ENCODE measurements at regions of chr6 and their contacts with region 1.

Region 1: DNA sequence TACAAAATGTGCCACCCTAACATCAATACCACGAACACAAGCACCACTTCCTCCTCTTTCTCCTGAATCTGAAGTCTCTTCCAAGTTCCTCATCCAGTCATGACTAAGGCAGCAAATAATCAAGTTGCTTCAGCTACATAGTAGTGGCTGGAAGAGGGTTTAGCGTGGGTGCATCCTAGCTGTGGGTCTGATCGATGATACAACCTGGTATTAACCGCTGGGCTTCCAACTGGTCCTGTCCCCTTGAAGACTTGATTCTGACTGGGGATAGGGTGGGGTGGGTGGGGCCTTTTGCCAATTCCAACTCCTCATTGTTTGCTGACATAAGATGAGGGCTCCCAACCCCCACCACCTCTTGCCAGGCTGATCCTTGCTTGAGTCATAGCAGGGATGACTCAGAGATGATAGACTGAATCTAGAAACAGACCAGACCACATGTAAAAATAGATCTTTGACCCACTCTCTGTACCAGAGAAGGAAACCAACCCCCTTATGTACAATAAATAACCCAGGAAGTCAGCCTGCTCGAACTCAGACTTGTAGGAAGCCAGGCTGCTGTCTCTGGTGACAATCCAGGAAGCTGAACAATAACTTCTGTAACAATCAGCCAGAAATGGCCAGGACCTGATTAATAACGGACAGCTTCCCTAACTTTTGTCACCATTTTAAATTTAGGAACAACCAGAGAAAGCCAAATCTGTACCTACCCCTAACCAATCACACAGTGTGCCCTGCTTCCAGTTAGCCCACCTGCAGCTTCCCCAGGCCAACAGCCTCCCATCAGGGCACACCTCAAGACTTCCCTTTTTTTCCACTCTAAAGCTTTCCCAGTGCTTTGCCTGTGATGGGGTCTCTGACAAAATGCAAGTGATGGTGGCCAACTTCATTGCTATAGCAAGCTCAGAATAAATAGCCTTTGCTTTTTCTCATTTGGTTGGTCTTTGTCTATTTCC is 68.9 kb upstream of the FAM184A start:
- DNase-seq: peak; percentile 74
- H3K4me3 ChIP-seq: no peak overlapping the region
- H3K27ac ChIP-seq: peak overlapping the region; percentile 36 to 73 (median 62)
- H3K4me1 ChIP-seq: peaks cover 0 to 25% (median 20%) of the 10 kb centered on the region in 4 donors
- H3K27me3 ChIP-seq: no peaks in the 10 kb centered on the region
- CTCF ChIP-seq: no peak
- EP300 ChIP-seq: no peak
- POLR2A ChIP-seq: no peak

Region 2: DNA sequence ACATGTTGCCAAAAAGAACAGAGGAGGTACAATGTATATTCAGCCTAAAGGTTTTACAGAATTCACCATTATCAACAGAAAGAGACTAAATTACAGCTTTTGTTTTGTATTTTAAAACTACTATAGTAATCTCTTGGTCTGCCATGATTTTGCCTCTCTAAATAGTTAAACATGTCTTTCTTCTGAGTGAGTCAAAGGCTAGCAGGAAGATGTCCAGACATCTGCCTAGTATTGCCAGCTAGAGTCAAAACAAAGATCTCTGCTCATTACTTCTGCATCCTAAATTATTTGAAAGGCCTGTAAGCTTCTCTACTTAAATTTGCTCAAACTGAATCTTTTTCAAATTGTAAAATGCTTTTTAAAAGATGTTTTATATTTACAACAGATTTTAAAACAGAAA is 244.7 kb before region 1 on chr6:
- intact Hi-C with region 1: no loop called
- DNase-seq: no peak
- H3K4me3 ChIP-seq: no peak overlapping the region
- H3K27ac ChIP-seq: no peak overlapping the region
- H3K4me1 ChIP-seq: peaks cover 0 to 20% (median 6%) of the 10 kb centered on the region in 4 donors
- H3K27me3 ChIP-seq: no peaks in the 10 kb centered on the region
- CTCF ChIP-seq: no peak
- EP300 ChIP-seq: no peak
- POLR2A ChIP-seq: no peak

Region 3: GRCh38 chr6:118934461-118935330 is 212.7 kb before region 1 on chr6 and contains the start of gene MCM9:
- intact Hi-C with region 1: no loop called
- DNase-seq: peak; percentile 90
- H3K4me3 ChIP-seq: peak within 1 kb of the TSS; percentile 71 to 89 (median 78)
- H3K27ac ChIP-seq: peak within 1 kb of the TSS; percentile 93 to 97 (median 96)
- H3K4me1 ChIP-seq: peaks cover 0 to 21% (median 8%) of the 10 kb centered on the region in 4 donors
- H3K27me3 ChIP-seq: no peaks in the 10 kb centered on the region
- CTCF ChIP-seq: no peak
- EP300 ChIP-seq: no peak
- POLR2A ChIP-seq: peak in 1 of 2 donors; percentile 6
- total RNA-seq, gene MCM9: 10.2 to 16.1 (median 13.2) TPM

Region 4: GRCh38 chr6:119541132-119541905 is 393.9 kb after region 1 on chr6:
- intact Hi-C with region 1: loop called (anchors 10 kb)
- DNase-seq: no peak
- H3K4me3 ChIP-seq: no peak overlapping the region
- H3K27ac ChIP-seq: peak overlapping the region; percentile 59 to 79 (median 74)
- H3K4me1 ChIP-seq: peaks cover 0 to 44% (median 32%) of the 10 kb centered on the region in 4 donors
- H3K27me3 ChIP-seq: no peaks in the 10 kb centered on the region
- CTCF ChIP-seq: no peak
- EP300 ChIP-seq: peak; percentile 67 to 95 (median 90)
- POLR2A ChIP-seq: no peak

Region 5: DNA sequence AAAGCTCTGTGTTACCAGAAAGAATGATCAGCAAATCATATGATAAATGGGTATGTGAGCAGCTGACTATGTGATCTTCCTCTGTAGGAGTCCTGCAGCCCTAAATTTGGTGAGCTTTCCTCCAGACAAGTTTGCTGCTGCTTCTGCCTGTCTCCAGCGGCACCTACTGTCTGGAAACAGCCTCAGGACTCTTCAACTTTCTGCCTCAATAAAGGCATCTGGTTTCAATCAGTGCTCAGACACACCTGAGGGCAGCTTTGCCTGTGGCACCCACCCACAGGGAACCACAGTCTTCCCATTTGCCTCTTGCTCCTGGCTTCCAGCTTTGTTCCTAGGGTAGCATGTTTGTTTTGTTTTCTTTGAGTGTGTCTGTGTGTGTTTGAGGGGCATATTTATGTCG is 930.1 kb after region 1 on chr6:
- intact Hi-C with region 1: loop called (anchors 10 kb)
- DNase-seq: no peak
- H3K4me3 ChIP-seq: no peak overlapping the region
- H3K27ac ChIP-seq: no peak overlapping the region
- H3K4me1 ChIP-seq: no peaks in the 10 kb centered on the region
- H3K27me3 ChIP-seq: no peaks in the 10 kb centered on the region
- CTCF ChIP-seq: peak in 1 of 4 experiments; percentile 38
- EP300 ChIP-seq: no peak
- POLR2A ChIP-seq: no peak